ENCODE measurements at regions of chr4 and their contacts with region 1.

Region 1: DNA sequence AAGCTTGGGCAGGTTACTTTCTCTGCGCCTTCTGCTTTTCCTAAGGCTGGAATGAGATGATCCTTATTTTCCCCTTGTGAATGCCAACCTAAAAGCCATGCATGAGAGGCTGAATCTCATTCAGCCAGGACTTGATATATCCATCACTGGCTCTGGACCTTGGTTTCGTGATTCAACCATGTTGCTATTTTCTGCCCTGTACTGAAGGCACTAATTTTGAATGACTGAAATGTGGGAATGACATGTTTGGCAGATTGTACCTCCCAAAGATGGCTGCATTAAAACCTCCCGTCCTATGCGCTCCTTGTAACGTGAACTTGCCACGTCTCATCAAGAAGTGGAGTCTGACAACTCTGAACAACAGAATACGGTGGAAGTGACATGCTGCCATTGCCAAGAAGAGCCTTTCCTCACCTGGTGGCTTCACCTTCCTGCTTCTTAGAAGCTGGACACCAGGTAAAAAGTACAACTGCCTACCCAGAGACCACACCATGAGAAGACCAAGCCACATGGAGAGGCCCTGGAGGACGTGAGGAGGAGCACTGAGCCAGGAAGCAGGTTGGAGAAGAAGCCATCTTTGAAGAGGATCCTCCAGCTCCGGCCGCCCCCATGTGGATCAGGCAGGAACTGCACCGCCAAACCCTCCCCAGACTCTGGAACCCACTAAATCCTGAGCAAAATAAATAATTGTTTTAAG is 174.5 kb downstream of the NSUN7 start:
- DNase-seq: peak; percentile 32
- ATAC-seq: peak; percentile 78
- H3K4me3 ChIP-seq: no peak overlapping the region
- H3K27ac ChIP-seq: no peak overlapping the region
- H3K4me1 ChIP-seq: peaks cover 0 to 4% of the 10 kb centered on the region in 2 experiments; a peak in 2 of 4 replicates
- H3K27me3 ChIP-seq: no peaks in the 10 kb centered on the region
- CTCF ChIP-seq: peak; percentile 73 to 96 (median 93)
- POLR2A ChIP-seq: no peak
- RAD21 ChIP-seq: peak; percentile 75

Region 2: DNA sequence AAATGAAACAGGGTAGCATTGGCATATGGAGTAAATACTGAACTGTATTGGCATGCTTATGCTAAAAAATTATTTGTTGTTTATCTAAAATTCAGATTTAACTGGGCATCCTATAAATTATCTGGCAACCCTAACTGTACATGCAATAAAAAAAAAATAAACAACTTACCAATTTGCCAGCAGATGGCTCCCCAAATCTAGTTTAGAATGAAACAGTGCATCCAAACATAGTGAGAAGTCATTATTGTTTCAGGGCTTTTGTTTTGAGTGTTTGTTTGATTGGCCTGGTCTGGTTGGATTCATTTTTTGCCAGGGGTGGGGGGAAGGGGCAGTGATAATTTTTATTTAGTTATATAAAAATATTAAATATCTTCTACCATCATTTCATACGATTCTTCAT is 187.3 kb before region 1 on chr4:
- CTCF ChIA-PET with region 1: interaction called, 3 read pairs
- POLR2A ChIA-PET with region 1: no interaction called
- RAD21 ChIA-PET with region 1: no interaction called
- intact Hi-C with region 1: loop called (anchors 2 kb)
- DNase-seq: peak; percentile 31
- ATAC-seq: peak; percentile 49
- H3K4me3 ChIP-seq: no peak overlapping the region
- H3K27ac ChIP-seq: no peak overlapping the region
- H3K4me1 ChIP-seq: no peaks in the 10 kb centered on the region
- H3K27me3 ChIP-seq: no peaks in the 10 kb centered on the region
- CTCF ChIP-seq: peak; percentile 22 to 70 (median 45); a peak in 4 of 6 replicates
- POLR2A ChIP-seq: no peak
- RAD21 ChIP-seq: peak; percentile 83

Region 3: GRCh38 chr4:40908702-40909362 is 15.4 kb before region 1 on chr4:
- CTCF ChIA-PET with region 1: interaction called, 25 read pairs
- POLR2A ChIA-PET with region 1: interaction called, 7 read pairs
- RAD21 ChIA-PET with region 1: no interaction called
- intact Hi-C with region 1: no loop called
- DNase-seq: peak; percentile 86
- ATAC-seq: peak; percentile 89
- H3K4me3 ChIP-seq: peak overlapping the region; percentile 15 to 49
- H3K27ac ChIP-seq: peak overlapping the region; percentile 78
- H3K4me1 ChIP-seq: peaks cover 33 to 40% of the 10 kb centered on the region in 2 experiments
- H3K27me3 ChIP-seq: no peaks in the 10 kb centered on the region
- CTCF ChIP-seq: peak in 2 of 3 experiments; percentile 98; a peak in 4 of 6 replicates
- POLR2A ChIP-seq: no peak
- RAD21 ChIP-seq: no peak

Measured in HCT116 (cell line).